Lower lobe of right lung (tissue), 2 donors: ENCODE measurements at regions of chr17 and their contacts with region 1.

Region 1: DNA sequence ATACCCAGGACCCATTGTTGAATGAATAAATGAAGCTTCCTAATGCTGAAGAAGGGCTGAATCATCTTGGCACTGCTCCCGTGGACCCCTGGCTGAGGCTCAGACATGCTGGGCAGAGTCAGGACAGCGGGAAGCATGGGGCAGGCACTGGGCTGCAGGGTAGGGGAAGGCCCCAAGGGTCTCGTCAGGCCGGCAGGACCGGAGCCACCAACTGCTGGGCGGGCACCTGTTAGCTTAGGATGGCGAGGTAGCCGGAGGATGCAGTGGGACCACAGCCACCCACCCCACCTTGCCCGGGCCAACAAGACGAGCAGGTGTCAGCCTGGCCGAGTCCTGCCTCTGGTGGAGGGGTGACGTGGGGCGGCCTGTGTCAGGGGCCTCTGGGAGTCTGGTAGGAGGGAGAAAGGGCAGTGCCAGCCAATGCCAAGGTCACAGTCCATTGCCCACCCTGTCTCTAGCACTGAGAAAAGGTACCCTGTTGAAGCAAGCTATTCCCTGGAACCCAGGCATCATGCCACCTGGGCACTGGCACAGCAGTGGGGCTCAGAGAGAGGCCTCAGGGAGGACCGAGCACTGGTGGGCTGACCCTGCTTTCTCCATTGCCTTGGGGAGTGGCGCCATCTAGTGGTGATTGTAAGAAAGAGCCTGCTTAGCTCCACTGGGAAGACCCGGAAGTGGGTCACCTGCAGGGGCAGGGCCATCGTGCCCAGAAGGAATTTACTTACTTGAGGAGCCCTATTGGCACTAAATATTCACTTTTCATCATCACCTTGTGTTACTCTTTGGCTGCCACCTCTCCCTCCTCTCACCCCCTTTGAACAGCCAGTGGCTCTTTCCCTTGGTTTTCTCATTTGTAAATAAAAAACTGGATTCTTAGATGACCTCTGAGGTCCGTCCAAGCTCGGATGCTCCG is 3.0 kb upstream of the DLX3 start:
- DNase-seq: peak; percentile 79
- ATAC-seq: peak; percentile 80 to 87
- H3K4me3 ChIP-seq: no peak overlapping the region
- H3K27ac ChIP-seq: no peak overlapping the region
- H3K4me1 ChIP-seq: peaks cover 43% of the 10 kb centered on the region
- H3K27me3 ChIP-seq: peaks cover 82% of the 10 kb centered on the region
- CTCF ChIP-seq: peak; percentile 99

Region 2: GRCh38 chr17:49861150-49861892 is 136.7 kb before region 1 on chr17:
- intact Hi-C with region 1: loop called (anchors 5 kb)
- DNase-seq: no peak
- ATAC-seq: peak; percentile 57 to 64
- H3K4me3 ChIP-seq: no peak overlapping the region
- H3K27ac ChIP-seq: no peak overlapping the region
- H3K4me1 ChIP-seq: peaks cover 5% of the 10 kb centered on the region
- H3K27me3 ChIP-seq: peaks cover 17% of the 10 kb centered on the region
- CTCF ChIP-seq: peak; percentile 86

Region 3: DNA sequence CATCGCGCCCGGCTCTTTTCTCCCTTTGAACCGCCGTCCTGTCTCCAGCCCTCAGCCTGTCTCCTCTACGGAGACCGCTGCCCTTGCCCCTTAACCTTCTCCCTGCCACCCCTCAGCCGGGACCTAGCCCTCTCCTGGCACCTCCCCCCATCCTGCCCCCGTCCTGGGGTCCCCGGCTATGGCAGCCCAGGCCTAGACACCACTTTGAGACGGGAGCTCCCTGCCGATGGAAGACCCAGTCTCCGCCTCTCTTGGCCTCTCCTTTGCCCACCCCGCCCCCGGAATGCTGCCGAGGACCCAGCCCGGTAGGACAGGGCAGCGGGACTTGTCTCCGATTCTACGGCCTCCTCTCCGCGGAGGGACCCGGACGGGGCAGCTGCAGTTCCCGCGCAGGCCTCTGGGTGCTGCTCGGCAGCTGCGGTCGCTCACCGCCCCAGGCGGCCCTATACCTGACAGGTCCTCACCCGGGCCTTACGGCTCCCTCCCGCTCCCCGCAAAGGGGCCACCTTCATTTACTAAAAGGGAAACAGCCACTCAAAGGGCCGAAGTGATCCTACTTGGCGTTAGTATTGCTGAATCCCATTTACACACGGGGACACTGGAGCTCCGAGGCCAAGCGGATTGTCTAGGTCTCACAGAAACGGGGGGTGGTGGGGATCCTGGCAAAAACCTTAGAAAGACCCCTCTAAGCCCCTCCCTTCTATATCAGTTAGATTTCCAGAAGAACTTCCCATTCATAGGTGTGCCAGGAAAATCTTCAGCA is 117.6 kb before region 1 on chr17:
- intact Hi-C with region 1: no loop called
- DNase-seq: peak; percentile 87
- ATAC-seq: peak; percentile 95
- H3K4me3 ChIP-seq: no peak overlapping the region
- H3K27ac ChIP-seq: no peak overlapping the region
- H3K4me1 ChIP-seq: peaks cover 9% of the 10 kb centered on the region
- H3K27me3 ChIP-seq: peaks cover 52% of the 10 kb centered on the region
- CTCF ChIP-seq: peak; percentile 99

Region 4: DNA sequence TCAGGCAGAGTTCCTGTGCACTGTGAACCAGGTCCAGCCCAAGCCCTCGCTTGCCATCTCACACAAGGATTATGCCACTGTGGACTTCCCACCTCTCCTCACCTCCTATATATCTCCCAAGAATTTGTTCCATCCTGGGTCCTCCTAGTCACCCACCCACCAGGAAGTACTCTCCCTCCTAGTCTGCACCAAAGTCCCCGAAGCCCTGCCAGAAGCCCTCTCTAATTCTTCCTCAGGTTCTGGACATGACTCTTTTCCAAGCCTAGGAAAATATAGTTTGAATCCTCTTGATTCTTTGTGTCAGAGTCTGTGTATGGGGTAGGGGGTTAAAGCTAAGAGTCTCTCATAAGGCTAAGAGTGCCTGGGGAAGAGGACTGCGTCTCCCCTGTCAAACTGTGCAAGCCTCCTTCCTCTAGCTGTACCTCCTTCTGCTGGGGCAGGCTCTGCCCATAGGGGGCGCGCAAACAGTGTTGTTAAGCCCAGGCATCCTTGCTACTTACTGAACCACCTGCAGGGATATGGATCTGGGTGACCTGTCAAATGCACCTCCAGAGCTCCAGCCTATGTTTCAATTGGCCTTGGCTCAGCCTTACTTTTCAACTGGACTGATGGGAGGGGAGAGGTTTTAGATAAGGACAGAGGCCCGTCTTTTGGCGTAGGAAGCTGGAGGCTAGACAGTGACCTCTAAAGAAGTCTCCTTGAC is 45.7 kb before region 1 on chr17:
- intact Hi-C with region 1: no loop called
- DNase-seq: peak; percentile 89
- ATAC-seq: peak; percentile 91 to 93
- H3K4me3 ChIP-seq: no peak overlapping the region
- H3K27ac ChIP-seq: no peak overlapping the region
- H3K4me1 ChIP-seq: no peaks in the 10 kb centered on the region
- H3K27me3 ChIP-seq: peaks cover 44% of the 10 kb centered on the region
- CTCF ChIP-seq: peak; percentile 89